Endothelial cell of umbilical vein (primary cell): ENCODE measurements at regions of chr1 and their contacts with region 1.

Region 1: GRCh38 chr1:192539297-192540092 is 36.1 kb upstream of the RGS1 start:
- DNase-seq: peak; percentile 95
- H3K4me3 ChIP-seq: no peak overlapping the region
- H3K27ac ChIP-seq: peak overlapping the region; percentile 87
- H3K4me1 ChIP-seq: peaks cover 18% of the 10 kb centered on the region
- H3K27me3 ChIP-seq: no peaks in the 10 kb centered on the region
- CTCF ChIP-seq: no peak
- POLR2A ChIP-seq: no peak

Region 2: DNA sequence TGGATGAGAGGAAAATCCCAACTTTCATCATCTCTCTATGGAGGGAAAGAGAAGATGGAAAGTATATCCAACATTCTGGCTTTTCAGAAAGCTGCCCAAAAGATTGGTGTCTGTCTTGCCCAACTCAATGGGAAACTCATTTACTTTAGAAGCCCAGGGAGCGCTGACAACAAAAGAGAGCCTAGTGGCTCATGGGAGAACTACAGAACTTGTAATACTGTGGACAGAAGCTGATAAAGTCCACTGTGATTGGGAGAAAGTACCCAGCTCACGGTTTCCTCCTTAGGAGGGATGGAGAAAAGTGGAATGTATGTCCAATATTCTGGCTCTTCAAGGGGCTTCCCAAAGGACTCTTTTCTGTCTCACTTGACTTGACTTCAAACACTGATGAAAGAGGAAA is 156.7 kb before region 1 on chr1:
- CTCF ChIA-PET with region 1: no interaction called
- POLR2A ChIA-PET with region 1: no interaction called
- dilution Hi-C with region 1: no loop called
- intact Hi-C with region 1: no loop called
- DNase-seq: no peak
- H3K4me3 ChIP-seq: no peak overlapping the region
- H3K27ac ChIP-seq: no peak overlapping the region
- H3K4me1 ChIP-seq: no peaks in the 10 kb centered on the region
- H3K27me3 ChIP-seq: no peaks in the 10 kb centered on the region
- CTCF ChIP-seq: no peak
- POLR2A ChIP-seq: no peak

Region 3: DNA sequence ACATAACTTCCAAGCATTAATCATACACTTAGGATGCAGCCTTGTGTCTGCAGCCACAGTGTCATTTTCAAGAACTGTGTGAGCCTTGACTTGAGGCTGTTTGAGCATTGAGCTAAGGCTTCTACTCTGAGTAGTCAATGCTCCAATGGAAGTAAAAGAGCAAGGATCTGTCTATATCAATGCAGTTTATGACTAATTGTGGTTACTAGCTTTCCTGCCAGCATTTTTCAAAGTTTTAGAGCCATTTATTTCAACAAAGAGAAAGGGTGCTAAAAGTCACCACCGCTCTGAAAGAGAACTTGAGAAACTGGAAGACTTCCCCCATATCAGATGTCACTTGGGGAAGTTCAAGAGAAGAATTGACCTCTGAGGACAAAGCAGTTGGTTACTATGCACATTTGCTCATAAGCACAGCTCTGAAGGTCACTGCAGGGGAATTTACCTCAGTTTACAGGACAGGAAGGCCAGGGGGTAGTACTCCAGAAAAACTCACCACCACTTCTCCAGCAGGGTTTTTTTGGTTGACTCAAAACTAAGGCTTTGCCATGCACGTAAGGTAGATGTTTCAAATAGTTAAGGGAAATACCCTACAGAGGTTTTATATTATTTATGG is 11.5 kb after region 1 on chr1:
- CTCF ChIA-PET with region 1: interaction called, 11 read pairs
- POLR2A ChIA-PET with region 1: no interaction called
- dilution Hi-C with region 1: no loop called
- intact Hi-C with region 1: no loop called
- DNase-seq: peak; percentile 33
- H3K4me3 ChIP-seq: no peak overlapping the region
- H3K27ac ChIP-seq: no peak overlapping the region
- H3K4me1 ChIP-seq: peaks cover 31% of the 10 kb centered on the region
- H3K27me3 ChIP-seq: no peaks in the 10 kb centered on the region
- CTCF ChIP-seq: no peak
- POLR2A ChIP-seq: no peak